Activated naive CD4-positive, alpha-beta T cell treated with anti-CD3 and anti-CD28 coated beads for 36 hours (primary cell): ENCODE measurements at regions of chr4 and their contacts with region 1.

Region 1: DNA sequence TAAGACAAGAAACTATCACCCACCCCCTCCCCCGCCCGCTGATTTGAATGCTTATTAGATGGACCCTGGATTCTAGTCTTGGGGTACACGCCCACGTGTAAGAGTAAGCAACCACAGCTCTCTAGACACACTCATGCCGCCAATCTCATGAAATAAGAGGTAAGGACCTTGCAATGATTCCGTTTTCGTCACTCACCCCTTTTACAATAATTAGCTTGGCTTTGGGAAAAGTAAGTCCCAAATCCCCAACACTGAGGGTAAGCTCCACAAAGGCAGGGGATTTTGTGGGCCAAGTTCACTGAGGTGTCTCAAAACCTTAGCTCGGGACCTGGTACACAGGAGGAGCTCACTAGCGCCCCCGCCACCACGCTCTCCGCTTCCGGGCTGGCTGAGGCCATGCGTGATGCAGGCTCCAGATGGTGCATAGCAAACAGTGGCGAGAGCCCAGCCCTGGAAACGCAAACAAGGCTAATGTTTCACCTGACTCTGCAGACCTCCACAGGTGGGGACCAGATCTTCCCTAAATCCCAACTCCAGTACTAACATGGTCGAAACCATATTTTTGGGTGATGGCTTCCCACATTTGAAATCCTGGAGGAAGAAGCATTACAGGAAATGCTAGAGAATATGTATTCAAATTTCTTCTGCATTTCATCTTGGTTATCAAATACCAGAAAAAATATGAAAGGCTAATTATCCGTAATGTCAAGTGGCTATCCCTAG is 4.1 kb downstream of the PLAC8 start:
- DNase-seq: peak; percentile 95
- H3K4me3 Mint-ChIP-seq: peak overlapping the region; percentile 88
- H3K27ac Mint-ChIP-seq: peak overlapping the region; percentile 98
- H3K4me1 Mint-ChIP-seq: peaks cover 41% of the 10 kb centered on the region
- H3K27me3 Mint-ChIP-seq: no peaks in the 10 kb centered on the region

Region 2: DNA sequence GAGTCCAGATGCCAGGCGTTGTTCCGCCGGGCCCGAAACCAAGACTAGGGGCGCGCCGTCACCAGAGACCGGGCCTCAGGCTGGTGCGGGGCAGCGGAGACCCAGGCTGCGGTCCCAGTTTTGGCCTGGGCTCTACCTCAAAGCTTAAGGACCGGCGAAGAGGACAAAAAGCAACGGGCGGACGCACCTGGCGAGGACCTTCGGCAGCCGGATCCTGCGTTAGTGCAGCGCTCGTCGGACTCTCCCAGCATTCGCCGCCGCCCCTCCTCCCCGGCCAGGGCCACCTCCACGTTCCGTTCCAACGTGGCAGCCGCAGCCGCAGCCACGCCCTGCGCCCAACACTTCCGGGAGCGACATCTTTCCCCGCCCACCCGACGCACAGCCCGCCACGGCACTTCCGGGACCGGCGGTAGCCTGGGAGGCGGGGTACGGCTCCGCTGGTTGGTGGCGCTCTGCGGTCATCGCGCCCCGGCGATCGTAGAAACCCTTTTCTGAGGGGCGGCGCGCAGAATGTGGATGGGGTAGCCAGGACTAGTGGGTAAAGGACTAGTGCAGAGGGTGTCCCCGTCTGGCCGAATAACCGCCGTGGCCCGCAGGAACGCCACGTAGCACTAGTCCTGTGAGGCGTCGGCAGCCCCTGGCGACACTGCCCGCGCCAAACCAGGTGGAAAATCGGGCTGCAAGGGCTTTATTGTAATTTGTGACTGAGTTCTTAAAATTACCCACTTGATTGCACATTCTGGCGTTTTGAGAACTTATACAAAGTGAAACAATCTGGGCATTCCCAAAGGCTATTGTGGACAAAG is 219.3 kb before region 1 on chr4 and contains the start of gene SEC31A:
- CTCF ChIA-PET with region 1: no interaction called
- intact Hi-C with region 1: loop called (anchors 2 kb)
- DNase-seq: peak; percentile 98
- H3K4me3 Mint-ChIP-seq: peak within 1 kb of the TSS; percentile 81
- H3K27ac Mint-ChIP-seq: peak within 1 kb of the TSS; percentile 89
- H3K4me1 Mint-ChIP-seq: peaks cover 49% of the 10 kb centered on the region
- H3K27me3 Mint-ChIP-seq: no peaks in the 10 kb centered on the region
- total RNA-seq, gene SEC31A: 85.1 to 85.7 TPM

Region 3: GRCh38 chr4:83074086-83074704 is 36.2 kb before region 1 on chr4:
- CTCF ChIA-PET with region 1: interaction called, 12 read pairs
- intact Hi-C with region 1: loop called (anchors 1 kb)
- DNase-seq: peak; percentile 76
- H3K4me3 Mint-ChIP-seq: no peak overlapping the region
- H3K27ac Mint-ChIP-seq: no peak overlapping the region
- H3K4me1 Mint-ChIP-seq: peaks cover 13% of the 10 kb centered on the region
- H3K27me3 Mint-ChIP-seq: no peaks in the 10 kb centered on the region

Region 4: DNA sequence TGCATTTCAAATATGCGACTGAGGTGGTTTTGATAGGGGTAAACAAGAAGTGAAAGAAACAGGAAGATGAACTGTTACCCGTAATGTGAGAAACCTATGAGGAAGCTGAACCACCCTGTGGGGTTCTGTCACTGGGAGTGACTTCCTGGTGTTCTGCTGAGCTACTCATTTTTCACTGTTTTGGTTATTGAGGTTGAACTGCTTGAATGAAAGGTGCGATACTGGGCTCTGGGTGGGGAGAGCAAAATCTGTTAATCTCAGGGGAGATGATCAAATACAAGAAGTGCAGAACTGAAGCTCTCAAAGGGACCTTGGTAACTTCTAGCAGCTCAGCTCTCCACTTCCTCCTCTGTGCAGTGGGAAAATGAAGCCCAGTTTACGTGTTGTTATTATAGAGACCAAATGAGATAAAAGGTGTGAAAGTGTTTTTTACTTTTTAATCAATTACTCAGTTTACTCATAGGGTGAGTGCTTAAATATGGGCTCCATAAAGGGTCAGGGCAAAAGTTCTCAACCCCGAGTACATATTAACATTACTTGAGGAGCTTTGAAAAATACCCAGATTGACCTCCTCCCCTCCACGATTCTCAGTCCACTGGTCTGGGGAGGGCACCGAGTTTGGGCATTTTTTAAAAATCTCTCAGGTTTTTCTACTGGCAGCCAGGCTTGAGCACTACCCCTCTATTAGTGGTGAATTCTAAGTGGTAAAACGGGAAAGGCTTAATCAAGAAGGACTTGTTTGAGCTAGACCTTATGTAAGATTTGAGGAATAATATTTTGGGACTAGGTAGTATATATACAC is 107.5 kb after region 1 on chr4:
- CTCF ChIA-PET with region 1: interaction called, 22 read pairs
- intact Hi-C with region 1: loop called (anchors 1 kb)
- DNase-seq: peak; percentile 82
- H3K4me3 Mint-ChIP-seq: peak overlapping the region; percentile 28
- H3K27ac Mint-ChIP-seq: peak overlapping the region; percentile 92
- H3K4me1 Mint-ChIP-seq: peaks cover 65% of the 10 kb centered on the region
- H3K27me3 Mint-ChIP-seq: no peaks in the 10 kb centered on the region

Region 5: DNA sequence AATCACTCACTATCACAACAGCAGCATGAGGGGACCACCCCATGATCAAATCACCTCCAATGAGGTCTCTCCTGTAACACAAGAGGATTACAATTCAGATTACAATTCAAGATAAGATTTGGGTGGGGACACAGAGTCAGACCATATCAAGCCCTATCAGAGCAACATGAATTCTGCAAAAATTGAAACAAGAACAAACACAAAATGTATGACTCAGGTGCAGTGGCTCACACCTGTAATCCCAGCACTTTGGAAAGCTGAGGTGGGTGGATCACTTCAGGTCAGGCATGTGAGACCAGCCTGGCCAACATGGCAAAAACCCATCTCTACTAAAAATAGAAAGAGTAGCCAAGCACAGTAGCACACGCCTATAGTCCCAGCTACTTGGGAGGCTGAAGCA is 237.7 kb after region 1 on chr4:
- CTCF ChIA-PET with region 1: no interaction called
- intact Hi-C with region 1: loop called (anchors 2 kb)
- DNase-seq: no peak
- H3K4me3 Mint-ChIP-seq: no peak overlapping the region
- H3K27ac Mint-ChIP-seq: no peak overlapping the region
- H3K4me1 Mint-ChIP-seq: peaks cover 20% of the 10 kb centered on the region
- H3K27me3 Mint-ChIP-seq: no peaks in the 10 kb centered on the region

Region 6: DNA sequence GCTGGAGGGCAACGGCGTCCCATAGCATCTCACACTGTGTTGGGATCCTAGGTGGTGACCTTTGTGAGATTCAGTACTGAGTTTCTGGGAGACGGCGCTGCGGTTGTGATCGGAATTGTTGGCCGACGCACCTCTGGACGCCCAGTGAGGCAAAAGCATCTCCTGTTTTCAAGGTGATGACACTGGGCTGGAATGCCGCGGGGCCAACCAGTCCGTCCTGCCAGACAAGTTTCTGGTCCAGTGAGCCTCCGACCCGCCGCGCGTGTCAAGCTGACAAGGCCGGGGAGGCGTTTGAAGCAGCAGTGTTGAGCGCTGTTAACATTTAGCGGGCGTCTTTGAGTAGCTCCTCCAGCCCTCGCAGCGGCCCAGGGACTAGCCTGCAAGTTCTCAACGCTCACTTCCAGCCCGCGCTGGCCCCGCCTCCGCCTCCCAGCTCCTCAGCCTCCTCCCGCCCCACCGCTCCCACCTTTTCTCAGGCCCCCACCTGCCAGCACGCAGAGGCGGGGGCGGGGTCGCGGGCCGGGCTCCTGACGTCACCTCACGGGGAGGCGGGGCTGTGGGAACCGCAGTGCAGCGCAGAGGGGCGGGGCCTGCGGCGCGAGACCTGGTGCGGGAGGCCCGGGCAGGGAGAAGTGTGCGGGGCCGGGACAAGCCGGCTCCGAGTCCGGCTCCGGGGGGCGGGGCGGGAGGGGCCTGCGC is 1472.1 kb after region 1 on chr4:
- CTCF ChIA-PET with region 1: no interaction called
- intact Hi-C with region 1: loop called (anchors 10 kb)
- DNase-seq: peak; percentile 95
- H3K4me3 Mint-ChIP-seq: peak overlapping the region; percentile 69
- H3K27ac Mint-ChIP-seq: no peak overlapping the region
- H3K4me1 Mint-ChIP-seq: peaks cover 12% of the 10 kb centered on the region
- H3K27me3 Mint-ChIP-seq: peaks cover 34% of the 10 kb centered on the region